IMR-90 (cell line): ENCODE measurements at regions of chr11 and their contacts with region 1.

Region 1: GRCh38 chr11:68727785-68728184 is 23.5 kb downstream of the TESMIN start:
- DNase-seq: peak; percentile 8
- ATAC-seq: peak; percentile 49; the same call in 1 of the 2 replicates
- H3K4me3 ChIP-seq: no peak overlapping the region
- H3K27ac ChIP-seq: no peak overlapping the region
- H3K4me1 ChIP-seq: no peaks in the 10 kb centered on the region
- H3K27me3 ChIP-seq: peaks cover 34% of the 10 kb centered on the region
- CTCF ChIP-seq: peak; percentile 27
- POLR2A ChIP-seq: no peak
- RAD21 ChIP-seq: no peak

Region 2: DNA sequence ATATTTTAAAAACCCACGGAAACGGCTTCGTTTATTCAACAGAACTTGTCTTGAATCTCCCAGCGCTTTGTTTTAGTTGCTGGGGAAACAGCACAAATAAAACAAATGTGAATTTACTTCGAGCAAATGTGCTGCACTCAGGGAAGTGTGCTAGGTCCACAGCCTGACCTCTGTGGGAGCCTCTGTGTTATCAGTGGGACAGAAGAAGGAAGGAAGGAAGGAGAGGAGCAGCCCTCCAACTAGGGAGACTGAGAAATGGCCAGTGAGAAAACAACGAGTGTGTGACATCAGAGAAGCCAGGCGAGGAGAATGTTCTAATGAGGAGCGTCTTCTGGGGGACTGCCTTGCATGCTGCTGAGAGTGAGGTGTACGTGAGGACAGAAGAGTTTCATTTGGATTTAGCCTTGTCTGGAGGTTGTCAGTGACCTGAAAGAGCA is 224.5 kb before region 1 on chr11:
- CTCF ChIA-PET with region 1: no interaction called
- POLR2A ChIA-PET with region 1: no interaction called
- dilution Hi-C with region 1: no loop called
- in situ Hi-C with region 1: no loop called
- intact Hi-C with region 1: no loop called
- DNase-seq: peak; percentile 36
- ATAC-seq: no peak
- H3K4me3 ChIP-seq: no peak overlapping the region
- H3K27ac ChIP-seq: no peak overlapping the region
- H3K4me1 ChIP-seq: peaks cover 12% of the 10 kb centered on the region
- H3K27me3 ChIP-seq: no peaks in the 10 kb centered on the region
- CTCF ChIP-seq: no peak
- POLR2A ChIP-seq: no peak
- RAD21 ChIP-seq: no peak

Region 3: DNA sequence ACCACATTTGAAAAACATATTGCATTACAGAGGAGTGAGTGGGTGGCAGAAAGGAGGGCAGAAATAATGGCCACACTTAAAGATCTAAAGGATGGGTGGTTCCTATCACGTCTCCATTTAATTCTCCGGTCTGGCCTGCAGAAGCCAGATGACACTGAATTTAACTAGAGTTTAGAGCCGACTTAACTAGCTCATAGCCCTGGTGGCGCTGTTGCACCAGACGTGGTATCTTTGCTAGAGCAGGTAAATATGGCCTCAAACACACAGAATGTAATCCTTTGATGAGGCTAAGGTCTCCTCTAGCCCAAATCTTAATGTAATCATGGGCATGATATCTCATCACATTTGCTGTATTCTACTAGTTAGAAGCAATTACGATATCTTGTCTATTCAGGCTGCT is 95.0 kb before region 1 on chr11:
- CTCF ChIA-PET with region 1: no interaction called
- POLR2A ChIA-PET with region 1: no interaction called
- dilution Hi-C with region 1: no loop called
- in situ Hi-C with region 1: no loop called
- intact Hi-C with region 1: loop called (anchors 5 kb)
- DNase-seq: peak; percentile 70
- ATAC-seq: peak; percentile 85
- H3K4me3 ChIP-seq: no peak overlapping the region
- H3K27ac ChIP-seq: no peak overlapping the region
- H3K4me1 ChIP-seq: no peaks in the 10 kb centered on the region
- H3K27me3 ChIP-seq: peaks cover 11% of the 10 kb centered on the region
- CTCF ChIP-seq: peak; percentile 68
- POLR2A ChIP-seq: no peak
- RAD21 ChIP-seq: peak; percentile 87